OCI-LY7 (cell line): ENCODE measurements at regions of chr14 and their contacts with region 1.

Region 1: DNA sequence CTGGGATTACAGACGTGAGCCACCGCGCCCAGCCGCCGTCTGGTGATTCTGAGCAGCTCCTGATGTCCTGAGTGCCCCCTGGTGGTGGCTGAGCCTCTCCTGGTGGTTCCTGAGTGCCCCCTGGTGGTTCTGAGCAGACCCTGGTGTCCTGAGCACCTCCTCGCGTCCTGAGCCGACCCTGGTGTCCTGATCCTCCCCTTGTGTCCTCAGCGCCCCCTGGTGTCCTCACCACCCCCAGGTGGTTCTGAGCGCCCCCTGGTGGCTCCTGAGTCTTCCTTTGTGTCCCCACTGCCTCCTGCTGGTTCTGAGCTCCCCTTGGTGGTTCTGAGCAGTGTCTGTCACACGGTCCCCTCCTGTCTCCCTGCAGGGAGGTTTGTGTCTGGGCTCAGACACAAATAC is 1304.9 kb downstream of the TMEM121 start:
- DNase-seq: peak; percentile 91
- H3K4me3 ChIP-seq: peak overlapping the region; percentile 24
- H3K27ac ChIP-seq: peak overlapping the region; percentile 17
- H3K4me1 ChIP-seq: peaks cover 5% of the 10 kb centered on the region
- CTCF ChIP-seq: peak; percentile 87

Region 2: DNA sequence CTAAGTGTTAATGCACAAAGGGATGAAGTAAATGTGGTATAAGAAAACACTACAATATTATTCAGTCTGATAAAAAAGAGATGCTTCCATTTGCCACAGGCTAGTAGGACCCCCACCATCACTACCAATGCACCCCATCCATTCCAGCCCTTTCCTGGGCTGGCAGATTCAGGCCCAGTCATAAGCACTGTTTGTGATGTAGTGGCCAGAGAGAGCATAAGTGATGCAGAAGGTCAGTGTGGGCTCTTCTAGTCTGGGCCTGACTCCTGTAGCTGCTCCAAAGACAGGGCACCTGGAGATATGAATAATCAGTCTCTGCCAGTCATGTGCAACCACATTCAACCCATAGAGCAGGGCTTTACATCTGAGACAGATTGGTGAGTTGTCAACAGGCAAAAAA is 10.2 kb before region 1 on chr14:
- CTCF ChIA-PET with region 1: interaction called, 16 read pairs
- POLR2A ChIA-PET with region 1: interaction called, 7 read pairs
- intact Hi-C with region 1: no loop called
- DNase-seq: peak; percentile 26
- H3K4me3 ChIP-seq: peak overlapping the region; percentile 17
- H3K27ac ChIP-seq: peak overlapping the region; percentile 25
- H3K4me1 ChIP-seq: peaks cover 33% of the 10 kb centered on the region
- CTCF ChIP-seq: no peak

Region 3: GRCh38 chr14:106844608-106845285 is 13.4 kb after region 1 on chr14:
- CTCF ChIA-PET with region 1: interaction called, 22 read pairs
- POLR2A ChIA-PET with region 1: interaction called, 9 read pairs
- intact Hi-C with region 1: loop called (anchors 1 kb)
- DNase-seq: peak; percentile 82
- H3K4me3 ChIP-seq: peak overlapping the region; percentile 87
- H3K27ac ChIP-seq: peak overlapping the region; percentile 98
- H3K4me1 ChIP-seq: peaks cover 69% of the 10 kb centered on the region
- CTCF ChIP-seq: no peak

Region 4: DNA sequence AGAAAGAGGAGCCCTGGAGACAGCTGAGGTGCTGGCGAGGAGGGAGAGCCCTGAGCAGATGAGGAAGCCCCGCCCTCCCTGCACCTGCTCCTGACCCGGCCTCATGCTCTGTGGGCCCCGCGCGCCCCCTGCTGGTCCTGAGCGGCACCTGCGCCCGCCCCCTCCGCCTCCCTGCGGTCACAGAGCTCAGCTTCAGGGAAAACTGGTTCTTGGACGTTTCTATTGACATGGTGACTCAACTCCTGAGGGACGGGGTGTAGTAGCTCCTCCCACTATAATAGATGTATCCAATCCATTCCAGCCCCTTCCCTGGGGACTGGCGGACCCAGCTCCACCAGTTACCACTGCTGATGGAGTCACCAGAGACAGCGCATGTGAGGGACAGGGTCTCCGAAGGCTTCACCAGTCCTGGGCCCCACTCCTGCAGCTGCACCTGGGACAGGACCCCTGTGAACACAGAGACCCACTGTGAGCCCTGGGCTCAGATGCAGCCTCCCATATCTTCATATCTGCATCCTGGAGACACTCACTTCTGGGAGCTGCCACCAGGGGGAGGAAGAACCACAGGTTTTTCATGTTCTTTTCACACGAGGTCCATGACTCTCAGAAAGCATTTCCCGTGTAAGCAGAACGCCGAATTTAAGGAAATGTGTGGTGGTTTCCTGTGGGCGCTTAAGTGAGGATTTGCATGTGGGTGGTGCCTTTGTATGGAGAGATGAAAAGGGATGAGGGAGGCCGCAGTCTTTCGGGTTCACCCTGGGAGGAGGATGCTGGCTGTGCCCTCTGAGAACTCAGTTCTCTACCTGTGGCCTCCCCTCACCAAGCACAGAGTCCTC is 41.5 kb after region 1 on chr14:
- CTCF ChIA-PET with region 1: interaction called, 32 read pairs
- POLR2A ChIA-PET with region 1: interaction called, 5 read pairs
- intact Hi-C with region 1: loop called (anchors 1 kb)
- DNase-seq: peak; percentile 90
- H3K4me3 ChIP-seq: peak overlapping the region; percentile 62
- H3K27ac ChIP-seq: peak overlapping the region; percentile 88
- H3K4me1 ChIP-seq: peaks cover 59% of the 10 kb centered on the region
- CTCF ChIP-seq: peak; percentile 87